Activated CD8-positive, alpha-beta T cell treated with anti-CD3 and anti-CD28 coated beads for 36 hours (primary cell): ENCODE measurements at regions of chr11 and their contacts with region 1.

Region 1: DNA sequence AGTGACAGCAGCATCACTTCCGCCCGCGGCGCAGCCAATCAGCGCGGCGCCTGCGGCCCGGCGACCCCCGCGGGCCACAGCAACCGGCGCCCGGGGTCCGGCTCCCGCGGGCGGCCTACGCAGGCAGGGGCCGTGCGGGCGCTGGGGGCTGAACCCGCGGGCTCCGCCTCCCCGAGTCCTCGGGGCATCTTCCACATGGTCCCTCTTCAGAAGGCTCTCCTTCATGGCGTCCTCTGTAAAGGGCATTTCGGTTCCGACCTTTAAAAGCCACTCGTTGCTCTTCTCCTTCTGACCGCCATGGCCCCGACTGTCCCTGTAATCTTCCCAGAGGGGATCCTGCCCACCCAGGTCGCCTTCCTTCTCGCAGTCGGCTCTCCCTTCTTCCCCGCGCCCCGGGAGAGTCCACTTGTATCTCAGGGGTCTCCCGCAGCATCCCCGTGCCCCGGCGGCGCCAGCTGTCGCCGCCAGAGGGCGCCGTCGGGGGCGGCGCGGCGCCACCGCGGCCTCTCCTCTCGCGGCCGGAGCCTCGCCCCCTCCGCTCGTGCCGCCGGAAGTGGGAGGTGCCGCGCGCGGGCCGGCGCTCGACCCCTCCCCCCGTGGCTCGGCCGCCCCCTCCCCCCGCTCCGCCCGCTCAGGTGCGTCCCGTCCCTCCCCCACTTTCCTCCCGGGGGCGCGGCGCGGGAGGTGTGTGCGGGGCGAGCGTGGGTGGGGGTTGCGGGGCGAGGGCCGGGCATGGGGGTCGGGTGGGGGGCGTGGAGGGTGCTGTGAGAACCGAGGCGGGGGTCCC is at the start of gene RNF214:
- DNase-seq: peak; percentile 71
- ATAC-seq: peak; percentile 73
- H3K4me3 Mint-ChIP-seq: peak within 1 kb of the TSS; percentile 94
- H3K27ac Mint-ChIP-seq: peak within 1 kb of the TSS; percentile 98
- H3K4me1 Mint-ChIP-seq: peaks cover 34% of the 10 kb centered on the region
- H3K27me3 Mint-ChIP-seq: no peaks in the 10 kb centered on the region
- CTCF ChIP-seq: peak; percentile 93
- total RNA-seq, gene RNF214: 14.7 to 18.3 TPM

Region 2: DNA sequence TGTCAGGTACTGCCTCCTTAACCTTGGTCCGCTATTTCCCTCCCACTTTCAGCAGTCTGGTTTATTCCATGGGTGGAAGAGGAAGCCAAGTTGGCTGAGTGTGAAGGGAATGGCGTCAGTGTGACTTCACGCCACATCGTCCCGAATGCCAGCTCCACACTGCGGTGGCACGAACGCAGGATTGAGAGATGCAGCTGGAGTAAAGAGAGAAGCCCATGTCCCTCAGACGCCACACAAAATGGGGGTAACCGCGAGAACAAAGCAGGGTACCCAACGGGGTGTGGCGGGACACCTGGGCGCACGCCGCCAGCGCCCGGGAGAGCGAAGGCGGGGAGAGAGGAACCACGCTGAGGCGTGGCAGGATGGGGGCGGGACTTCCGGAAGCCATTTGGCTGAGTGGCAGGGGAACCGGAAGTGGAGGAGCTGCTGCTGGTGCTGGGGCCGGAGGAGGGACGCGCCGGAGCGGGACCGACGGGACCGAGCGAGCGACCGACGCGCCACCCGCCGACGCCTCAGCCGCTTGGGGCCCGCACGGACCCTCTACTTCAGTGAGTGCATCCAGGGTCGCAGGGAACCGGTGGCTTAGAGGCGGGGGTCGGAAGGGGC is 88.3 kb before region 1 on chr11 and contains the start of gene PAFAH1B2:
- CTCF ChIA-PET with region 1: interaction called, 6 read pairs
- POLR2A ChIA-PET with region 1: interaction called, 17 read pairs
- intact Hi-C with region 1: no loop called
- DNase-seq: peak; percentile 97
- ATAC-seq: peak; percentile 94
- H3K4me3 Mint-ChIP-seq: peak within 1 kb of the TSS; percentile 99
- H3K27ac Mint-ChIP-seq: peak within 1 kb of the TSS; percentile 92
- H3K4me1 Mint-ChIP-seq: peaks cover 34% of the 10 kb centered on the region
- H3K27me3 Mint-ChIP-seq: peaks cover 8% of the 10 kb centered on the region
- CTCF ChIP-seq: no peak
- total RNA-seq, gene PAFAH1B2: 50.0 to 50.2 TPM

Region 3: DNA sequence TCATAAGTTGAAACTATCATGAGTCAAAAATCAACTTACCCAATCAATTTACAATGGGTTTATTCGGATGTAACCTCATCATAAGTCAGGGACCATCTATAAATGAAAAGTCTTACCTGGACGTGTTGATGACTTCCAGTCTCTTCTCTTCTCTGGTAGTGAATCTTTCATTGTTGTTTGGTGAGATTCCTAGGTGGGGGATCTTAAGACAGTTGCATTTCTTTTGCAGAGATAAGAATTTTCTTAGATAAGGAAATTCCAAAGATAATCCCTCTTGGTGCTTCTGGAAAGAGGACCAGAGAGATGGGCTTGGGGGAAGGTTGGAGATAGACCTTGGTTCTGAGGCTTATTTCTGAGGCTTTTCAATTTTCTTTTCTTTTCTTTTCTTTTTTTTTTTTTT is 37.6 kb after region 1 on chr11:
- CTCF ChIA-PET with region 1: no interaction called
- POLR2A ChIA-PET with region 1: no interaction called
- intact Hi-C with region 1: loop called (anchors 5 kb)
- DNase-seq: no peak
- ATAC-seq: no peak
- H3K4me3 Mint-ChIP-seq: no peak overlapping the region
- H3K27ac Mint-ChIP-seq: no peak overlapping the region
- H3K4me1 Mint-ChIP-seq: no peaks in the 10 kb centered on the region
- H3K27me3 Mint-ChIP-seq: no peaks in the 10 kb centered on the region
- CTCF ChIP-seq: no peak

Region 4: GRCh38 chr11:117299351-117300282 is 67.3 kb after region 1 on chr11:
- CTCF ChIA-PET with region 1: no interaction called
- POLR2A ChIA-PET with region 1: no interaction called
- intact Hi-C with region 1: no loop called
- DNase-seq: no peak
- ATAC-seq: no peak
- H3K4me3 Mint-ChIP-seq: no peak overlapping the region
- H3K27ac Mint-ChIP-seq: no peak overlapping the region
- H3K4me1 Mint-ChIP-seq: no peaks in the 10 kb centered on the region
- H3K27me3 Mint-ChIP-seq: no peaks in the 10 kb centered on the region
- CTCF ChIP-seq: no peak